Calu3 (cell line): ENCODE measurements at regions of chr2 and their contacts with region 1.

Region 1: GRCh38 chr2:28958689-28959088 is 22.4 kb upstream of the TOGARAM2 start:
- DNase-seq: peak; percentile 65
- H3K4me3 Mint-ChIP-seq: no peak overlapping the region
- H3K27ac Mint-ChIP-seq: no peak overlapping the region
- H3K4me1 Mint-ChIP-seq: peaks cover 8% of the 10 kb centered on the region
- H3K27me3 Mint-ChIP-seq: no peaks in the 10 kb centered on the region
- CTCF ChIP-seq: peak; percentile 72

Region 2: GRCh38 chr2:28736034-28736433 is 222.7 kb before region 1 on chr2:
- CTCF ChIA-PET with region 1: no interaction called
- intact Hi-C with region 1: no loop called
- DNase-seq: no peak
- H3K4me3 Mint-ChIP-seq: no peak overlapping the region
- H3K27ac Mint-ChIP-seq: no peak overlapping the region
- H3K4me1 Mint-ChIP-seq: no peaks in the 10 kb centered on the region
- H3K27me3 Mint-ChIP-seq: no peaks in the 10 kb centered on the region
- CTCF ChIP-seq: no peak

Region 3: GRCh38 chr2:28796620-28797019 is 162.1 kb before region 1 on chr2:
- CTCF ChIA-PET with region 1: no interaction called
- intact Hi-C with region 1: no loop called
- DNase-seq: no peak
- H3K4me3 Mint-ChIP-seq: no peak overlapping the region
- H3K27ac Mint-ChIP-seq: no peak overlapping the region
- H3K4me1 Mint-ChIP-seq: peaks cover 20% of the 10 kb centered on the region
- H3K27me3 Mint-ChIP-seq: no peaks in the 10 kb centered on the region
- CTCF ChIP-seq: no peak

Region 4: DNA sequence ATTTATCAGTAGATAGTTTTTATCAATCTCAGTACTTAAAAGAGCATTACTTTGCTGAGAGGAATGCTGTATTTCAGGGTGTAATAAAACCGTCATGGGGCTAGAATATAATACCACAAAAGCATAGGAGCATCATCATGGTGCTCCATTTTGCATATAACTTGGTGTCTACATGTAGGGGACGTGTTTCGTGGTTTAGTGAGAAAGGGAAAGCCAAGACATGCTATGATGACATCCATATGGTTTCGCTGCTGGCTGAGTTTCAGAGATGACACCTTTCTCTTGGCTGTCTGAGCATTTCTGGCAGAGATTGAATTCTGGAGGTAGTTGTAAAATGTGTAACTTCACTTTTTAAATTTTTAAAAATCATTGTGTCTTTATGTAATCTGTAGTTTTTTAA is 31.8 kb before region 1 on chr2:
- CTCF ChIA-PET with region 1: no interaction called
- intact Hi-C with region 1: no loop called
- DNase-seq: no peak
- H3K4me3 Mint-ChIP-seq: no peak overlapping the region
- H3K27ac Mint-ChIP-seq: peak overlapping the region; percentile 30
- H3K4me1 Mint-ChIP-seq: peaks cover 8% of the 10 kb centered on the region
- H3K27me3 Mint-ChIP-seq: no peaks in the 10 kb centered on the region
- CTCF ChIP-seq: no peak

Region 5: DNA sequence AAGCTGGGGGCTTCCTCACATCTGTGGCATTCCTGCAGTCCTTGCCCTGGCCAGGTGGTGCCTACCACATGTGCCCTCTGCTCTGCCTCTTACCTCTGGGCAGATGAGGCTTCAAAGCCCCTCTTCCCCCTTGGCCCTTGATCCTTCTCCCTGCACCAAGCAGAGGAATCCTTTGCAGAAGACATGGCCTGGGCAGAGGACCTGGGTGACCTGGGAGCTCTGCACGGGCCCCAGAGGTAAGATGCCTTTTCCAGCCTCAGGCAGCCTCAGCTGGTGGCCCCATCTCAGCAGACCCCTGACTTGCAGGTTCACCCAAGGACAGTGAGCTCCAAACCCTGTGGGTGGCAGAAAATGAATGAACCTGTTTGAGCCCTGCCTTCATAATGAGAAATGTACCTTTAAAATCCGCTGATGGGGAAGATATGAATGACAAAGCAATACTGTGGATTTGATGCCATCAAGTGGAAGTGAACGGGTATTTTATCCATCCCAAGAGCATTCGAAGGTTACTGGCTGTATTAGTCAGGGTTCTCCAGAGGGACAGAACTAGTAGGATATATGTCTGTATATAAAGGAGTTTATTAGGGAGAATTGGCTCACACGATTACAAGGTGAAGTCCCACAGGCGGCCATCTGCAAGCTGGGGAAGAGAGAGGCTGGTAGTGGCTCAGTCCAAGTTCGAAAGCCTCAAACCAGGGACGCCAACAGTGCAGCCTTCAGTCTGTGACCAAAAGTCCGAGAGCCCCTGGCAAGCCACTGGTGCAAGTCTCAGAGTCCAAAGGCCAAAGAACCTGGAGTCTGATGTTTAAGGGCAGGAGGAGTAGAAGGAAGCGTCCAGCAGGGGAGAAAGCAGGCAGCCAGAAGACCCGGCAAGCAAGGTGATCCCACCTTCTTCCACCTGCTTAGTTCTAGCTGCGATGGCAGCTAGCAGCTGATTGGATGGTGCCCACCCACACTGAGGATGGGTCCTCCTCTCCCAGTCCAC is 54.4 kb after region 1 on chr2:
- CTCF ChIA-PET with region 1: no interaction called
- intact Hi-C with region 1: loop called (anchors 1 kb)
- DNase-seq: no peak
- H3K4me3 Mint-ChIP-seq: no peak overlapping the region
- H3K27ac Mint-ChIP-seq: no peak overlapping the region
- H3K4me1 Mint-ChIP-seq: peaks cover 9% of the 10 kb centered on the region
- H3K27me3 Mint-ChIP-seq: peaks cover 11% of the 10 kb centered on the region
- CTCF ChIP-seq: no peak

Region 6: DNA sequence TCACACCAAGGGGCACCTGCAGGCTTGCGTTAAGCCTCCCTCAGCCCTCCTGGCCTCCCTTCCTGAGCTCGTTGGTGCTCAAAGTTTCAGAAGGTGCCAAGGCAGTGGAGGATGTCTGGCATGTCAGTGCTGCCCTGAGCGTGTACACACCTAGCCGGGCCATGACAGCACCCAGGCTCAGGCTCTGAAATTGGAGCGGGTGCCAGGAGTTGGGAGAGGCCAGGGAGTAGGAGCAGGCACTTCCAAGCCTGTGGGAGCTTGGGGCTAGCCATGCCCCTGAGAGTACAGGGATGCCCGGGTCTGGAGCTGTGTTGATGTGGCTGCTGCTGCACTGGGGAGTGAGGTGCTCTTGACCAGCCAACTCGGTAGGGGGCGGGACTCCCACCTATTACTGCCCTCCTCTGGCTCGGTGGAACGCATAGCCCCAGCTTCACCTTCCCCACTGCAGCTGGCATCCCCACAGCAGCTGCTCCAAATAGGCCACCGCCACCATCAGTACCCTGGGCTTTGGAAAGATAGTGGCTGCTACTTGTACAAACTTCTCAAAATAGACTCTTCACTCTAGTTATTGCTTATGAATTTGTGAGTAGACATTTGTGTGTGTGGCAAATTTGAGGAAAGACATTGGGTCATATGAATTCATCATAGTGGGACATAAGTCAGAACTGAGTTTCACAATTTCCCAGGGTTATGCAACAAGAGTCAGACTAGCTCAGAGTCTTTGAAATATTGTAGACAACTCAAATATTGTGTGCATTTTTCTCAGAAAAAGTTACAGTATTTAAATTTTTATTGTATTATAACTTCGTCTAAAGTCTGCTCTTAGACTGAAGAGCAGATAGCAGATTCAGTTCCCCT is 122.4 kb after region 1 on chr2:
- CTCF ChIA-PET with region 1: no interaction called
- intact Hi-C with region 1: no loop called
- DNase-seq: no peak
- H3K4me3 Mint-ChIP-seq: no peak overlapping the region
- H3K27ac Mint-ChIP-seq: no peak overlapping the region
- H3K4me1 Mint-ChIP-seq: no peaks in the 10 kb centered on the region
- H3K27me3 Mint-ChIP-seq: no peaks in the 10 kb centered on the region
- CTCF ChIP-seq: no peak